Naive thymus-derived CD4-positive, alpha-beta T cell (primary cell): ENCODE measurements at regions of chr1 and their contacts with region 1.

Region 1: DNA sequence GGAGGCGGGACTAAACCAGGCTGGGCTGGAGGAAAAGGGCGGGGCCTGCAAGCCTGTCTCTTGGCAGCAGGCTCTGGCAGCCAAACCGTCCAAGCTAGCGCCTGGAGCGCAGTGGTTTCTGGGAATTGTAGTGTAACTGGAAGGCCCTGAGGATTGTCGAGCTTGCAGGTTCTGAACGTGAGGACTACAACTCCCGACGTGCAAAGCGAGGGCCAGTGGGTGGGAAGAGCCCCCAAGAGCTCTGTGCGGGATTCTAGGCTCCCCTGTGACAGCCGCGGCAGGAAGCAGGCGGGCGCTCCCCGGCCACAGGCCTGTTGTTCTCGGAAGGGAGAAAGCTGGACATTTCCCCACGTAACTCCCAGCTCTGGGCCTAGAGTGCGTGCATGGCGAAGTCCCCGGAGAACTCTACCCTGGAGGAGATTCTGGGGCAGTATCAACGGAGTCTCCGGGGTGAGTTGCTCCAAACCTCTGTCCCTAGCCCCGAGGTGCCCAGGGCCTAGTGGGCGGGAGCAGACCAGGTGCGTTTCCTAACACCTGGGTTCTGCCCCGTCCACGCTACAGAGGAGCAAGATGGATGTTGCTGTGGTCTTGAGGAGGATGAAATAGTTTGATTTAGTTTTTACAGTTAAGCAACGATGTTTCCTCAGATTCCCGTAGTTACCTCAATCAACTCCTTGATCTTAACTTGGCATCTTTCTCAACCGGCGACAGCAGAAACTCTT is at the start of gene SDCCAG8:
- DNase-seq: peak; percentile 75 to 97 (median 94)
- ATAC-seq: peak; percentile 85
- H3K4me3 ChIP-seq: peak within 1 kb of the TSS; percentile 94
- H3K4me3 Mint-ChIP-seq: peak within 1 kb of the TSS; percentile 97 to 100 (median 100)
- H3K27ac ChIP-seq: peak within 1 kb of the TSS; percentile 96
- H3K27ac Mint-ChIP-seq: peak within 1 kb of the TSS; percentile 99 to 100 (median 100)
- H3K4me1 ChIP-seq: peaks cover 13 to 22% of the 10 kb centered on the region in 2 donors
- H3K4me1 Mint-ChIP-seq: peaks cover 19 to 66% (median 51%) of the 10 kb centered on the region in 7 donors
- H3K27me3 ChIP-seq: no peaks in the 10 kb centered on the region
- H3K27me3 Mint-ChIP-seq: peaks cover 0 to 3% (median 0%) of the 10 kb centered on the region in 5 donors
- total RNA-seq, gene SDCCAG8: 26.0 to 45.2 (median 41.4) TPM

Region 2: DNA sequence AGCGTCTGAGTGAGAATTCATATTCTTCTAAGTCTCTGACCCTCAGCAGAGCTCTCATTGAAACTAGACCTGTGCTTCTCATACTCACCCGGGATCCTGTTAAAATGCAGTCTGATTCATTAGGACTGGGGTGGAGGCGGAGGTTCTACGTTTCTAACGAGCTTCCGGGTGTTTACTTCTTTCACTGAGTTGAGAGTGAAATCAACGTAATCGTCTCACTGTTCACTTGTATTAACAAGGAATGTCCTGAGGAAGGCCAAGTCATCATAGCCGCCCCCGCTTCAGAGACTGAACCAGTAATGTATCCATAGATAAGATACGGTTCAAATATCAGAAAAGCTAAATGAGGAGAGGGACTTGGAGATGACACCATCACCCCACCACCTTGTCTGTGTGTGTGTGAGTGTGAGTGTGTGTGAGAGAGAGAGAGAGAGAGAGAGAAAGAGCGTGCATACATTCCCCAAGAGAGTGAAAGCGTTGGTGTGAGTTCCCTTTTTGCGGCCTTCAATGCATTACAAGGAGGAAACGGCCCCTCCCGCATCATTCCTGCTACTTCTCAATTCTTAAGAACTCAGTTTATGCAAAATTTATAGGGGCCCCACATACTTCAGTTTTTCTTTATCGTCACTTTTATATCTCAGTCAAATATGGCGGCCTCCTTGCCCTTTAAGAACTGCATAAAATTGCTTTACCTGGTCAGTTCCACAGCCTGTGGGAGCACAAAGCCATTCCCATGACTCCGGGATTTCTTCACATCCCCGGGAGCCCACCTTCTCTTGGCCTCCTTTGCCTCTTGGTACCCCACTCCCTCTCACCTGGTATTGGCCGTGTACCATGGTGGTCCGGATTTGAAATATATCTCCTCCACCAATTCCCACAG is 1704.0 kb before region 1 on chr1:
- CTCF ChIA-PET with region 1: no interaction called
- POLR2A ChIA-PET with region 1: no interaction called
- intact Hi-C with region 1: loop called in 1 of 2 experiments (anchors 1 kb)
- DNase-seq: peak; percentile 25 to 72 (median 61)
- ATAC-seq: peak; percentile 91
- H3K4me3 ChIP-seq: peak overlapping the region; percentile 49
- H3K4me3 Mint-ChIP-seq: peak overlapping the region; percentile 83 to 93 (median 88)
- H3K27ac ChIP-seq: peak overlapping the region; percentile 55
- H3K27ac Mint-ChIP-seq: peak overlapping the region; percentile 93 to 98 (median 96)
- H3K4me1 ChIP-seq: peaks cover 0 to 14% of the 10 kb centered on the region in 2 donors
- H3K4me1 Mint-ChIP-seq: peaks cover 14 to 36% (median 25%) of the 10 kb centered on the region in 7 donors
- H3K27me3 ChIP-seq: no peaks in the 10 kb centered on the region
- H3K27me3 Mint-ChIP-seq: peaks cover 0 to 5% (median 0%) of the 10 kb centered on the region in 5 donors

Region 3: GRCh38 chr1:242065813-242066212 is 1190.1 kb before region 1 on chr1:
- CTCF ChIA-PET with region 1: no interaction called
- POLR2A ChIA-PET with region 1: no interaction called
- intact Hi-C with region 1: no loop called
- DNase-seq: no peak
- ATAC-seq: no peak
- H3K4me3 ChIP-seq: no peak overlapping the region
- H3K4me3 Mint-ChIP-seq: no peak overlapping the region
- H3K27ac ChIP-seq: no peak overlapping the region
- H3K27ac Mint-ChIP-seq: no peak overlapping the region
- H3K4me1 ChIP-seq: no peaks in the 10 kb centered on the region
- H3K4me1 Mint-ChIP-seq: no peaks in the 10 kb centered on the region
- H3K27me3 ChIP-seq: no peaks in the 10 kb centered on the region
- H3K27me3 Mint-ChIP-seq: peaks cover 0 to 19% (median 10%) of the 10 kb centered on the region in 5 donors

Region 4: DNA sequence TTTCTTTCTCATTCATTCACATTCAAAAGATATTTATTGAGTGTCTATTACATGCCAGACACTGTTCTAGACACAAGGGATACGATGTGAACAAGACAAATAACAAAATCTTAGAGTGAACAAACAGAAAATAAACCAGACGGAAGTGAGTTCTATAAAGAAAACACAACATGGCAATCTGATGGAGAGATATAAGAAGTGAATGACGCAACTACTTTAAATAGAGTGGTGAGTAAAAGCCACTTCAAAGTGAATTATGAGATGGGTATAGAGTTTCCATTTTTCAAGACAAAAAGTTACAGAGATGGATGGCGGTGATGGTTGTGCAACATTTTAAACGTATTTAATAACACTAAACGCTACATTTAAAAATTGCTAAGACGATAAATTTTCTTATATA is 76.2 kb before region 1 on chr1:
- CTCF ChIA-PET with region 1: no interaction called
- POLR2A ChIA-PET with region 1: no interaction called
- intact Hi-C with region 1: loop called in 1 of 2 experiments (anchors 2 kb)
- DNase-seq: peak in 7 of 9 donors; percentile 9 to 61 (median 48)
- ATAC-seq: peak; percentile 57
- H3K4me3 ChIP-seq: no peak overlapping the region
- H3K4me3 Mint-ChIP-seq: peak overlapping the region in 2 of 10 donors; percentile 7 to 69
- H3K27ac ChIP-seq: no peak overlapping the region
- H3K27ac Mint-ChIP-seq: peak overlapping the region in 5 of 9 donors; percentile 8 to 37 (median 14)
- H3K4me1 ChIP-seq: no peaks in the 10 kb centered on the region
- H3K4me1 Mint-ChIP-seq: peaks cover 2 to 27% (median 23%) of the 10 kb centered on the region in 7 donors
- H3K27me3 ChIP-seq: no peaks in the 10 kb centered on the region
- H3K27me3 Mint-ChIP-seq: no peaks in the 10 kb centered on the region

Region 5: GRCh38 chr1:243271996-243272395 is 16.0 kb after region 1 on chr1:
- CTCF ChIA-PET with region 1: no interaction called
- POLR2A ChIA-PET with region 1: interaction called, 6 read pairs
- intact Hi-C with region 1: loop called in 1 of 2 experiments (anchors 1 kb)
- DNase-seq: no peak
- ATAC-seq: no peak
- H3K4me3 ChIP-seq: no peak overlapping the region
- H3K4me3 Mint-ChIP-seq: no peak overlapping the region
- H3K27ac ChIP-seq: no peak overlapping the region
- H3K27ac Mint-ChIP-seq: no peak overlapping the region
- H3K4me1 ChIP-seq: no peaks in the 10 kb centered on the region
- H3K4me1 Mint-ChIP-seq: peaks cover 7 to 33% (median 27%) of the 10 kb centered on the region in 7 donors
- H3K27me3 ChIP-seq: no peaks in the 10 kb centered on the region
- H3K27me3 Mint-ChIP-seq: no peaks in the 10 kb centered on the region

Region 6: DNA sequence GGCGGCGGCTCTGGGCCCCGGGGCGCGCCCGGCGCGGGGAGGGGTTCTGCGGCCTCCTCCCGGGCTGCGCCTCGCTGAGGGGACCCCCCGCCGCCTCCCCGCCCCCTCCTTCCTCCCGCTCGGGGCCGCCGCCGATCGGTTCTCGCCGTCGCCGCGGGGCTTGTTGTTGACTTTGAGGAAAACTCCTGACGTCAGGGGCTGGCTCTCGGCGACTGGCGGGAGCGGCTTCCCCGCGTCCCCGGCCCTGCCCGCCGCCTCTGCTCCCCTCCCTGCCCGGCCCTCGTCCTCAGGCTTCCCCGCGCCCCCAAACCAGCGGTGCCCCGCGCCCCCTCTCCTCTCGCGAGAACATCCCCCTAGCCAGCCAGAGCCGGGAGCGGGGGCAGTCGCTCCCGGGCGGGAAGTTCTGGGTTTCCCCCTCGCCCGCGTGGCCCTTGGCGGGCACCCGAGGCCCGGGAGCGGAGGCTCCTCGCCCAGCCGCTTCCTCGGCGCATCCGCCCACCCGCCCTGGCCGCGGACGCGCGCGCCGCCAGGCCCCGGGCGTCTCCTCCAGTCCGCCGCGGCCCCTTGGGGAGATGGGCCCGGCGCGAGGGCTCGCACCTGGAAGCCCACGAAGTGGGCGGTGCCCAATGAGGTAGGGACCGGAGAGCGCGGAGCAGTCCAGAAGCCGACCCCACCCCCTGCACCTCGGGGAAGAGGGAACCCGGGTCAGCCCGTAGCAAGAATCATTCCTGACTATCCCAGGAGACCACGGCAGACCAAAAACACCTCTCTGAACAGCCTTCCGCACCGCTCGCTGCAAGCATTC is 594.7 kb after region 1 on chr1:
- CTCF ChIA-PET with region 1: no interaction called
- POLR2A ChIA-PET with region 1: no interaction called
- intact Hi-C with region 1: loop called (anchors 1 kb)
- DNase-seq: peak; percentile 79 to 88 (median 84)
- ATAC-seq: peak; percentile 64
- H3K4me3 ChIP-seq: peak overlapping the region; percentile 75
- H3K4me3 Mint-ChIP-seq: peak overlapping the region; percentile 90 to 97 (median 93)
- H3K27ac ChIP-seq: peak overlapping the region; percentile 97
- H3K27ac Mint-ChIP-seq: peak overlapping the region; percentile 88 to 99 (median 93)
- H3K4me1 ChIP-seq: peaks cover 4 to 5% of the 10 kb centered on the region in 2 donors
- H3K4me1 Mint-ChIP-seq: peaks cover 8 to 47% (median 30%) of the 10 kb centered on the region in 7 donors
- H3K27me3 ChIP-seq: no peaks in the 10 kb centered on the region
- H3K27me3 Mint-ChIP-seq: peaks cover 0 to 59% (median 0%) of the 10 kb centered on the region in 5 donors

Region 7: GRCh38 chr1:244652699-244653466 is 1396.9 kb after region 1 on chr1 and contains the start of gene DESI2:
- CTCF ChIA-PET with region 1: no interaction called
- POLR2A ChIA-PET with region 1: no interaction called
- intact Hi-C with region 1: loop called in 1 of 2 experiments (anchors 1 kb)
- DNase-seq: peak; percentile 95 to 100 (median 98)
- ATAC-seq: peak; percentile 95
- H3K4me3 ChIP-seq: peak within 1 kb of the TSS; percentile 75
- H3K4me3 Mint-ChIP-seq: peak within 1 kb of the TSS in 9 of 10 donors; percentile 83 to 91 (median 88)
- H3K27ac ChIP-seq: peak within 1 kb of the TSS; percentile 87
- H3K27ac Mint-ChIP-seq: peak within 1 kb of the TSS; percentile 81 to 96 (median 90)
- H3K4me1 ChIP-seq: peaks cover 19 to 24% of the 10 kb centered on the region in 2 donors
- H3K4me1 Mint-ChIP-seq: peaks cover 19 to 33% (median 21%) of the 10 kb centered on the region in 7 donors
- H3K27me3 ChIP-seq: no peaks in the 10 kb centered on the region
- H3K27me3 Mint-ChIP-seq: no peaks in the 10 kb centered on the region
- total RNA-seq, gene DESI2: 13.0 to 23.4 (median 17.6) TPM